Activated naive CD4-positive, alpha-beta T cell treated with anti-CD3 and anti-CD28 coated beads, Interleukin-2, amount 10 ng/mL, durations not matched to agents 7 days and 5 days (primary cell): ENCODE measurements at regions of chr17 and their contacts with region 1.

Region 1: DNA sequence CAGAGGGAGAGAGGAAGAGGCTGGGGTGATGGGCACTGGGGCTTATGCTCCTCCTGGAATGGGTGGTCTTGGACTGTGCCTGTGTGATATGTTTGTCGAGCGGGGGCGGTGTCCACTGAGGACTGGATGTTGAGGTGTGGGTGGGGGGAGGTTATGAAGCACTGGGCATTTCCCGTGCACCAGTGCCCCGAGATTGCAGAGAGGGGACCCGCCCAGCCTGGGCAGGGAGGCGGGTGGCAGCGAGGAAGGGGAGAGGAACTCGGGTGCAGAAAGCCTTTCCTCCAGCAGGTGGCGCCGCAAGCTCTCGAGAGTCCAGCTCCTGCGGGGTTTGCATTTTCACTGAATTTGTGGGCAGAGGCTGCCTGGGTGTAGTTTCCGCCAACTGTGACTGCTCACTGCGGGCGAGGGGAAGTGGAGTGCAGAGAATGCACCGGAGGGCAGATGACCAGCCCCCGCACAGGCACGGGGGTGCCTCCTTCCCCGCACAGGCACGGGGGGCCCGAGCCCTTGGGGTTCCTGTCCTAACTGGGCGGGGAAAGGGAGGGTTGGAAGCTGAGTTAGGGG is 190.6 kb downstream of the SEC14L1 start:
- DNase-seq: peak; percentile 98
- H3K4me3 Mint-ChIP-seq: peak overlapping the region; percentile 68
- H3K27ac Mint-ChIP-seq: peak overlapping the region; percentile 94
- H3K4me1 Mint-ChIP-seq: peaks cover 71% of the 10 kb centered on the region
- H3K27me3 Mint-ChIP-seq: peaks cover 8% of the 10 kb centered on the region

Region 2: GRCh38 chr17:77266891-77267341 is 64.5 kb before region 1 on chr17:
- CTCF ChIA-PET with region 1: no interaction called
- DNase-seq: no peak
- H3K4me3 Mint-ChIP-seq: no peak overlapping the region
- H3K27ac Mint-ChIP-seq: no peak overlapping the region
- H3K4me1 Mint-ChIP-seq: no peaks in the 10 kb centered on the region
- H3K27me3 Mint-ChIP-seq: peaks cover 36% of the 10 kb centered on the region

Region 3: DNA sequence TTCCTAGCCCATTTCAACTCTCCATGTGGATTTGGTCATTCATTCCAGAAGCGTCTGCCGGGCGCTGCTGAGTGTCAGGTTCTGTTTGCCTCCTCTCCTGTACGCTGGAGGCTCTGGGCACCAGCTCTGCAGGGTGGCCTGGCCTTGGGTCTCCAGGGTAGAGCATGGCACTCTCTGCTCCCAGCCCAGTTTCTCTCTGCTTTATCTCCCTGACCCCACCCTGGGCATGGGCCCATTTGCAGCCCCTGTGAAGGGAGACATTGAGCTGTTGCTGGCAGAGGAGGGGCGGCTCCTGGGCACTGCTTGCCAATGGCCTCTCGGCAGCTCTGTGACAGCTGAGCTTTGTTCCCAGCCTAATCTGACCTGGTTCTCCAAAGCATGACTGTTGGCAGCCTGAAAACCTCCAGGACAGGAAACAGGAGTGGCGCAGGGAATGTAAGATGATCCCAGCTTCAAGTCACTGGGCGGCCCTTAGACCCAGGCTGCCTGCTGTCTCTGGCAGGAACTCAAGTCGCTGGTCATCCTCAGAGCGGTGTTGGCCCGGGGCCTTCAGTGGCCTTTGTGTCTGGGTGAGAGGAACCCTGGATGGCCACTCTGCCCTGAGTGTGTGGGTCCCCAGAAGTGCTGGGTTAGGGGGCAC is 43.8 kb before region 1 on chr17:
- CTCF ChIA-PET with region 1: no interaction called
- DNase-seq: no peak
- H3K4me3 Mint-ChIP-seq: no peak overlapping the region
- H3K27ac Mint-ChIP-seq: no peak overlapping the region
- H3K4me1 Mint-ChIP-seq: peaks cover 4% of the 10 kb centered on the region
- H3K27me3 Mint-ChIP-seq: peaks cover 50% of the 10 kb centered on the region

Region 4: DNA sequence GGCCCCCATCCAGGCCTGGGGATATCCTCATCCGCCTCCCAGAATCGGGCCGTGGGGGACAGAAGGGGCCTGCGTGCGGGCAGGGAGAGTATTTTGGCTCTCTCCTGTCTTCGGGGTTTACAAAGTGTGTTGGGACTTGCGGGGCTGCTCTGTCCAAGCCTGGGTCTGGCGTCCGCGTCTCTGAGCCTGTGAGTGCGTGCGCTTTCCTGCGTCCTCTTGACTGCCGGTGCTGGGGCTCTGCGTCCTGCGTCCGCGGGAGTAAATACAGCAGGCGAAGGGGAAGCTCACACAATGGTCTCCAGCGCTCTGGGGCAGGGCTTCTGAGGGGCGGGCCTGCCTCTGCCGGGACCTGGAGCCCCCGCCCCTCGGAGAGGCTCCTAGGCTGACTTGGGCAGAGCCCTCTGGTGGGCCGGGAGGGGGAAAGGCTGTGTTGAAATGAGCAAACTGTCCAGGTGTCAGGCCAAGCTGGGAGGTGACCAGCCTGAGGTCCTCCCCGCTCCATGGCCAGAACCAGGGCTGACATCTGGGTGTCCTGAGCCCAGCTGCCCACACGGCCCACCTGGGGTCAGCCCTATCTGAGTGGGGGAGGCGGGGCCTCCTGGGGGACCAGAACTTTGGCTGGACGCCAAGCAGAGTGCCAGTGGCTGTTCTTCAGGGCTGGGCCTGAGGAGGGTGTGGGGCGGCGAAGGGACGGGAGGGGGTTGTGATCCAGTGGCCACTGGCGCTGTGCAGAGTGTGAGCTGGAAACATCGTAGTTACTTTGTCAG is 43.0 kb after region 1 on chr17:
- CTCF ChIA-PET with region 1: interaction called, 27 read pairs
- DNase-seq: peak; percentile 90
- H3K4me3 Mint-ChIP-seq: peak overlapping the region; percentile 100
- H3K27ac Mint-ChIP-seq: peak overlapping the region; percentile 97
- H3K4me1 Mint-ChIP-seq: peaks cover 72% of the 10 kb centered on the region
- H3K27me3 Mint-ChIP-seq: peaks cover 9% of the 10 kb centered on the region

Region 5: DNA sequence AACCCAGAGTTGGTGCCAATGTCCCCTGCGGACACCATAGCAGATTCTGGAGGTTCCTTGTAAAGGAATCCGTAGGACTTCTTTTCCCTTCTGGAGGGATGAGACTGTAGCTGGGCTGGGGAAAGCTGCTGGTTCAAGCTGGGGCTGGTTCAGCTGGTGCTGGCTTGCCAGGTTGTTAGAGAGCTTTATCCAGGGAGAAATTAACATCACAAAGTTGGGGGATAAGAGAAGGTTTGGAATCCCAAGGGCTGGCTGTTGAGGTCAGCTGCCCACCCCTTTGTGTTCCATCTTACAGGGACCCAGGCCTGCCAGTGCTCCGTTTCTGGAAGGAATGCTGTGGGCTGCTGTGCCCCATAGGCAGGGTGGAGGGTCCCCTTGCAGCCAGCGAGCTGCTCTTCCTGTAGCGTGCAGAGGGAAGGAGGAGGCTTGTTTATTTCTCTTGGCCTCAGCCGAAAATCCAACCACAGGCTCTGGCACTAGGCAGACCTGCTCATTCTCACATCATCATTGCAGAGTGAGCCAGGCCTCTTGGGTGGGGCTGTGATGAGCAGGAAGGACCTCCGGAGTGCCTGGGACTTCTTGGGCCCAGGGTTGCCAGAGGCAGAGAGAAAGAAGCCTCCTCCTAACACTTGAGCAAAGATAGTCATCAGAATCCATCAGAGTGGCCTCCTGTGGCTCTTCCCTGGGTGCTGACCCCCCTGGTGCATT is 60.4 kb after region 1 on chr17:
- CTCF ChIA-PET with region 1: interaction called, 28 read pairs
- DNase-seq: peak; percentile 85
- H3K4me3 Mint-ChIP-seq: peak overlapping the region; percentile 79
- H3K27ac Mint-ChIP-seq: peak overlapping the region; percentile 95
- H3K4me1 Mint-ChIP-seq: peaks cover 91% of the 10 kb centered on the region
- H3K27me3 Mint-ChIP-seq: no peaks in the 10 kb centered on the region

Region 6: GRCh38 chr17:77494664-77495435 is 163.5 kb after region 1 on chr17:
- CTCF ChIA-PET with region 1: interaction called, 20 read pairs
- DNase-seq: peak; percentile 78
- H3K4me3 Mint-ChIP-seq: no peak overlapping the region
- H3K27ac Mint-ChIP-seq: peak overlapping the region; percentile 76
- H3K4me1 Mint-ChIP-seq: peaks cover 28% of the 10 kb centered on the region
- H3K27me3 Mint-ChIP-seq: no peaks in the 10 kb centered on the region